ENCODE measurements at regions of chr18 and their contacts with region 1.

Region 1: DNA sequence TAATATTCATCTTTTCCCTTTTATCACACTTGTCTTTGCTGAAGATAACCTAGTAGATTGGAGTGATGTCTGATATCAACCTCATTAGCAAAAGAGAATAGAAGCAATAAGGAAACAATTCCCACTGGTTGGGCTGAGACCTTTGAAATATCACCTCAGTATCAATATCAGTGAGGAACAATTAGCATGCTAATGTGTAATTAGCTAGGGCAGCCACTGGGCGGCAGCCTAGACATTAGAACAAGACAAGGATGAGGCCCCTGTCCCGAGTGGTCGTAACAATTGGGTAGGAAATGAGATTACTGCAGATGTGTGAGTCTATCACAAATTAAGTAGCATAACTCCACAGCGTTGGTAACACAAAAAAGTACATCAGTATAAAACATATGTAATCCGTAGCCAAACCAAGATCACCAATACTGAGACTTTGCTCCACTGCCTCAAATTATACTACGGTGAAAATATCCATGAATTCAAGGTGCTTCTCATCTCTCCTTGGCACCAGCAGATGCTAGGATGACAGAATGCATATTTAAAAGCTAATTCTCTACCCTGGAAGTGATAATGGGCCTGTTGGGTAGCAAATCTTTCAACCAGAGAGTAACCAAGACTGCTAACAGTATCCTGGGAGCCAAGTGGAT is 99.1 kb downstream of the ALPK2 start:
- DNase-seq: no peak
- ATAC-seq: no peak

Region 2: DNA sequence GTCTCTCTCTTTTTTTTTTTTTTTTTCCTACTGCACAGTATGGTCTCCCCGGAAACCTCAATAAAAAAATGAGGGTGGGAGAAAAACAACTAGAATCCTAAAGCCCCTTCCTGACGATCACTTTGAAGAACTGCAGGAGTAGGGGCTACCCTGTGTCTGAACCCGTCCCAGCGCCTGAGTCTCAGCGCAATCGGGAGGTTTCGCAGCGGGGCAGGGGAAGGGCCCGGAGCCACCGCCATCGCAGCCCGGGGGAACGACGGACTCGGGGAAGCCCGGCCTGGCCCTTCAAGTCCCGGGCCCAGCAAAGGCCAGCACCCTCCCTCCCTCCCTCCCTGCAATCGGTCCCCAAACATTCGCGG is 908.6 kb before region 1 on chr18:
- intact Hi-C with region 1: no loop called
- DNase-seq: no peak
- ATAC-seq: peak; percentile 30

Region 3: GRCh38 chr18:57959278-57959677 is 570.6 kb before region 1 on chr18:
- intact Hi-C with region 1: no loop called
- DNase-seq: no peak
- ATAC-seq: no peak

Region 4: DNA sequence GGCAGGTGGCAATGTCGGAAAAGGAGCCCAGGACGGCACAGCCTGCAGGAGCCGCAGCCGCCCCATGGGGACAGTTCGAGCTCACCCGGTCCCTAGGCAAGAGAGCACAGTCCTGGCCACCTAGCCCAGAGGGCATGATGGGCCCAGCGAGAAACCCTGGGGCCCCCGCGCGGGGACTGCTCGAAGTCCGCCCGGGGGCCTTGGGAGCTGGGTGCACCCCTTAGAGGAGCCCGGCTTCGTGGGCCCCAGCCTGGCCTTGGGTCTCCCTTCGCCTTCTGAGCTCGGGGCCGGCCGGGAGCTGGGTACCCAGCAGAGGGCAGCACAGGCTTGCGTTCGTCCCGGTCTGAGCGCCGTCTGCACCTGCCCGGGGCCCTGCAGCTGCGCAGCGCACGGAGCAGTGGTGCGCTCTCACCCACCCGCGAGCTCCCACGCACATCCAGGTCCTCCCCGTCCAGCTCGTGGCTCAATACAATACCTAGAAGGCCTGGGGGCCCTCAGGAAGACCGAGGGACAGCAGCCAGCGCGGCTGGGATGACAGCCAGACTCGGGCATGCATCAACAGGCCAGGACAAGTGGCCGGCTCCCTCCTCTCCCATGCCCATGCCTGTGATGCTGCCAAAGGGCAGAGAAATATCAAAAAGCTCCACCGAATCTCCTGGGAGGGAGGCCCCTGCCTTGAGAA is 238.6 kb after region 1 on chr18:
- intact Hi-C with region 1: loop called (anchors 10 kb)
- DNase-seq: peak; percentile 86
- ATAC-seq: peak; percentile 94

Measured in sciatic nerve (tissue), 2 donors.